Sciatic nerve (tissue), 2 donors: ENCODE measurements at regions of chr1 and their contacts with region 1.

Region 1: DNA sequence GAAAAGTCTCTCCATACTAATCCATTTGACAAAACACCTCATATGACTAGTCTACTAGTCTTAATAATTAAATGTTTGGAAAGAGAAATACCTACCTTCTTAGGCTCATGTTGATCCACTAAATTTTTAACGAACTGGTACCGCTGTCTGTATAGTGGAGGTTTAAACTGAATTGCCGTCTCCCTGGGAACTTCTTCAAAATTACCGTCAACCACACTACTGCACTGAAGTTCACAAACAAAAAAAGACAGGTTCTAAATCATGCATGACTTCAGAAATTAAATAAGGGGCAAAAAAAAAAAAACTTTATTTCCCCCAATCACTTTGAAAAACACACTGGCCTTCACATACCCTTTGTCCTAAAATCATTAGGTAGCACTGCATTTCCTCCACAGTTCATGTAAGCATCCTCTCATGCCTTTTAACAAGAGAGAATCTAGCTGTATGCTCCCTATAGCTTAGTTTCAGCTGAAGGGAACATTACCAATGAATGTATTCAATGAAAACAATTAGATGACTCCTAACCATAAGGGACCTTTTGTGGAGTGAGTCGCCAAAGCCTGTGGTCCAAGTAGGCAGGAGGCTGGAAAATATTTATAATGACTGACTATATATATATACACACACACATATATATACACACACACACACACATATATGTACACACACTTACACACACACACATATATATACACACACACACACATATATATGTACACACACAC is 3.4 kb downstream of the HENMT1 start:
- DNase-seq: no peak
- ATAC-seq: no peak

Region 2: GRCh38 chr1:107405236-107405635 is 1252.3 kb before region 1 on chr1:
- intact Hi-C with region 1: loop called (anchors 5 kb)
- DNase-seq: no peak
- ATAC-seq: peak; percentile 74

Region 3: DNA sequence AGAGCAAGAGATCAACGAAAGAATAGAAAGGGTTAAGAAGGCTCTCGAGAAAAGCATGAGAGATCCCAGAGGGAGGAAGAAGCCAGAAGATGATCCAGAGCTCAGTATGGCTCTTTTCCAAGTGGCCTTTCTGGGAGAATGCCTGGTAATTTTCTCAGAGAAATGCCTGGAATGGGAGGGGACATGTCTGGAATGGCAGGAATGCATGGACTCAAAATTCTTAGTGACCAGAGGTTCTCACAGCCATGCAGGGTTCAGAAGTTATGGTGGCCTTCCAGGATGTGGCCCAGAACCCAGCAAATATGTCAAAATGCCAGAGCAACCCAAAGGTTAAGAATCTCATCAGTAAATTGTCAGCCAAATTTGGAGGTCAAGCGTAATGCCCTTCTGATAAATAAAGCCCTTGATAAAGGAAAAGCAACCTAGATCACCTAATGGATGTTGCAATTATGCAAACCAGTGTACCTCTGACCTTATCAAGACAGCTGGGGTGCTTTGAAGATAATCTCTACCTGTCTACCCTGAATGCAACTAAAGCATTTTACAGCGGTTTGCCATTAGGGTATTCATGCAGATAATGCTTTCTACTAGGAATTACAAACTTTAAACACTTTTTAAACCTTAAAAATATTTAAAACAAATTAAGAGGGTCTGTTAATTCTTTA is 154.3 kb before region 1 on chr1:
- intact Hi-C with region 1: no loop called
- DNase-seq: no peak
- ATAC-seq: peak; percentile 64

Region 4: GRCh38 chr1:109089242-109090015 is 431.9 kb after region 1 on chr1:
- intact Hi-C with region 1: no loop called
- DNase-seq: peak; percentile 73
- ATAC-seq: peak; percentile 49